HCT116 (cell line): ENCODE measurements at regions of chr11 and their contacts with region 1.

Region 1: DNA sequence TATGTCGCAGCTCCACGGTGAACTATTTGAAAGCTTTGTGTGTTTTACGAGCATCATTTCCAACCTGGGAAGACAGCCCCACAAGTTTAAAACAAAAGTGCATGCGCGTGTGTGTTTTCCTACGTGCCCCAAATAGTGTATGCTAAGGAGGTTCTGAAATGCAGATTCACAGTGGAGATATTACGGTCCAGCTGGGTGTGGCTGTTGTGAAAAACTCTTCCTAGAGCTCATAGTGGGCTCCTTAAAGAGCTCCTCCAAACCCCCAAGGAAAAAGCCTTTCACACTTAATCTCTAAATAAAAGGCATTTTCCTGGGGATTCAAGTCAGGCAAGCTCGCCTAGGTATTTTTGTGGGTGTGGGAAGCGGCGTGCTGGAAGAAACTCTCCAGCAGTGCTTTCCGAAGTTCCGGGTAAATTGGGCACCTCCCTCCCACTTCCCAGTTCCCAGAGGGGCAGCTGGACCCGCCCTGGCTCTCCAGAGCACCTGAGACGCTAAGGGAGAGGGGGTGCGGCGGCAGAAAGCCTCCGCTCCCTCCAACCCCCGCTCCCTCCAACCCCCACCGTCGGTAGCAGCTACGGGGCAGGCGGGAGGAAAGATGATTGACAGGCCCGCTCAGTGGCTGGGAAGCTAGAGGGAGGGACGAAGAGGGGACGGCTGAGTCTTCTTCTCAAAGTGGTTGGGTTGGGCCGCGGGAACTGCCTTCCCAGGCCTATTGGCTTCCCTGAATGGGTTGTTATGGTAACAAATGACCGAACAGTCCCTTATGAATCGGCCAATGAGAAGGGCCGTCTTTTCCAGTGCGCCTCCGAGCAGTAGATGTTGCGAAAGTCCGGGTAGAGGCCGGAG is 558 bp upstream of the PCF11 start:
- DNase-seq: peak; percentile 99
- ATAC-seq: peak; percentile 89
- H3K4me3 ChIP-seq: peak overlapping the region; percentile 65 to 97
- H3K27ac ChIP-seq: peak overlapping the region; percentile 88
- H3K4me1 ChIP-seq: peaks cover 11 to 41% of the 10 kb centered on the region in 2 experiments
- H3K27me3 ChIP-seq: no peaks in the 10 kb centered on the region
- CTCF ChIP-seq: no peak
- POLR2A ChIP-seq: peak; percentile 56
- RAD21 ChIP-seq: no peak

Region 2: DNA sequence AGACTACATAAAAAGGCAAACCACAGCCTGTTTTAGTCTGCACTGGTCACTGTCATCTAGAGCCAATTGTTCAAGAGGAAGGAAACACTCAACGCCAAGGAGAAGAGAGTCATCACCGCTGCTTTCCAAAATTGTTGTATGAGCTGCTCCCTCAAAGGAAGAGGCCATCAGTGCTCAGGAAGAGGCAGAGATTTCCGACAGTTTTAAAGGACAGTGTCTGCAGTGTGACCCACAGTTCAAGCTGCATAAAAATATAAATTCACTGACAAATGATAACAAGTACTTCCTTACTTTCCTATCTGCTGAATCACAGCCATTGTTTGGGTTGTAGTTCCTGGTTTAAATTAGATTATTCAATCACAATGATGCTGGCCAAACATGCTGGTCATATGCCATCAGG is 272.5 kb before region 1 on chr11:
- CTCF ChIA-PET with region 1: no interaction called
- POLR2A ChIA-PET with region 1: no interaction called
- RAD21 ChIA-PET with region 1: no interaction called
- intact Hi-C with region 1: no loop called
- DNase-seq: no peak
- ATAC-seq: no peak
- H3K4me3 ChIP-seq: no peak overlapping the region
- H3K27ac ChIP-seq: no peak overlapping the region
- H3K4me1 ChIP-seq: no peaks in the 10 kb centered on the region
- H3K27me3 ChIP-seq: no peaks in the 10 kb centered on the region
- CTCF ChIP-seq: no peak
- POLR2A ChIP-seq: no peak
- RAD21 ChIP-seq: no peak

Region 3: DNA sequence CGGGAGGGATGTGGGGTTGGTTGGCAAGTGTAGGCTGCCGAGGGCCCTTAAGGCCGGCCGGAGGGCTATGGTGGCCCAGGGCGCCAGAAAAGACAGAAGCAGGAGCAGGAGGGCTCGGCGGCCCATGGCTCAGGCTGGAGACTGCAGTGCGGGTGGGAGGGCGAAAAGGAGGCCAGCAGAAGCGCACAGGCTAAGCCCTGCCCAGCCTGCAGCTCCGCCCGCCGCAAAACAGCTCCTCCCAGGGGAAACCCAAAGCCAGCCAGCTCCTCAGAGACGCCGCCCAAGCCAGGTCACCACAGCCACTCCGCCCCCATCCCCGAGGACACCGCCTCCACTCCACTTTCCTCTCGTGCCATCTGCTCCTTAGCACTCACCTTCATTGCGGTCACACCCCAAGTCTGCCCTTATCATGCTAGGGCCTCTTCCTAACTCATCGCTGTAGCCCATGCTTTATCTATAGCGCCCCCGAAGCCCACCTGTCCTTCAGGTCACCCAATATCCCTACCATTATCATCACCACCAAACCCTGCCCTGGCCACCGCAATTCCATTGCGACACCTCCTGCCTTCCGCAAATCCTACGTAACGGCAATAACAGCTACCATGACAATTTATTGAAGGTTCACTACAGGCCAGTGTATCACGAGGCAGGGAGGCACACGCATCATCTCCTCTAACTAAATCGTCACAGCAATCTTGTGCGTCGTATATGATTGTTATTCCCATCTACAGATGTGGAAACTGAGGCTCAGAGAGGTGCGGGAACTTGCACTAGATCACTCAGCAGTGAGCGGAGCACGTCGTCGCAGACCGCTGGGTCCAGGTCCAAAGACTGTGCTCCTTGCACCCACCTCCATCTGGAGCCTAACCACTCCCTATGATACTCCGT is 255.9 kb before region 1 on chr11 and contains the start of gene PRCP:
- CTCF ChIA-PET with region 1: no interaction called
- POLR2A ChIA-PET with region 1: interaction called, 15 read pairs
- RAD21 ChIA-PET with region 1: no interaction called
- intact Hi-C with region 1: loop called (anchors 1 kb)
- DNase-seq: peak; percentile 82
- ATAC-seq: peak; percentile 89
- H3K4me3 ChIP-seq: peak within 1 kb of the TSS; percentile 55 to 96
- H3K27ac ChIP-seq: peak within 1 kb of the TSS; percentile 69
- H3K4me1 ChIP-seq: peaks cover 10 to 24% of the 10 kb centered on the region in 2 experiments; a peak in 3 of 4 replicates
- H3K27me3 ChIP-seq: no peaks in the 10 kb centered on the region
- CTCF ChIP-seq: 0 out of 6 replicates have a peak, but pooled peaks of 1 of the 3 experiments have one; percentile 2
- POLR2A ChIP-seq: peak; percentile 59
- RAD21 ChIP-seq: no peak
- total RNA-seq, gene PRCP: 50.0 TPM

Region 4: GRCh38 chr11:83071567-83072349 is 84.6 kb before region 1 on chr11 and contains the start of gene RAB30:
- CTCF ChIA-PET with region 1: no interaction called
- POLR2A ChIA-PET with region 1: interaction called, 8 read pairs
- RAD21 ChIA-PET with region 1: no interaction called
- intact Hi-C with region 1: loop called (anchors 1 kb)
- DNase-seq: peak; percentile 99
- ATAC-seq: peak; percentile 95
- H3K4me3 ChIP-seq: peak within 1 kb of the TSS; percentile 90 to 95
- H3K27ac ChIP-seq: peak within 1 kb of the TSS; percentile 77
- H3K4me1 ChIP-seq: peaks cover 11 to 27% of the 10 kb centered on the region in 2 experiments
- H3K27me3 ChIP-seq: no peaks in the 10 kb centered on the region
- CTCF ChIP-seq: no peak
- POLR2A ChIP-seq: peak; percentile 45
- RAD21 ChIP-seq: no peak; the same call in 1 of the 2 replicates
- total RNA-seq, gene RAB30: 5.7 TPM

Region 5: GRCh38 chr11:83087035-83087434 is 69.3 kb before region 1 on chr11:
- CTCF ChIA-PET with region 1: no interaction called
- POLR2A ChIA-PET with region 1: interaction called, 10 read pairs
- RAD21 ChIA-PET with region 1: no interaction called
- intact Hi-C with region 1: loop called (anchors 2 kb)
- DNase-seq: no peak
- ATAC-seq: peak; percentile 64
- H3K4me3 ChIP-seq: no peak overlapping the region
- H3K27ac ChIP-seq: no peak overlapping the region
- H3K4me1 ChIP-seq: peaks cover 2 to 5% of the 10 kb centered on the region in 2 experiments; a peak in 3 of 4 replicates
- H3K27me3 ChIP-seq: no peaks in the 10 kb centered on the region
- CTCF ChIP-seq: peak; percentile 11 to 42 (median 35); a peak in 3 of 6 replicates
- POLR2A ChIP-seq: no peak
- RAD21 ChIP-seq: peak; percentile 67

Region 6: GRCh38 chr11:83193315-83194280 is 37.2 kb after region 1 on chr11 and contains the start of gene ANKRD42:
- CTCF ChIA-PET with region 1: no interaction called
- POLR2A ChIA-PET with region 1: interaction called, 4 read pairs
- RAD21 ChIA-PET with region 1: no interaction called
- intact Hi-C with region 1: loop called (anchors 5 kb)
- DNase-seq: peak; percentile 89
- ATAC-seq: peak; percentile 91
- H3K4me3 ChIP-seq: peak within 1 kb of the TSS; percentile 56 to 85
- H3K27ac ChIP-seq: peak within 1 kb of the TSS; percentile 65
- H3K4me1 ChIP-seq: peaks cover 12 to 19% of the 10 kb centered on the region in 2 experiments
- H3K27me3 ChIP-seq: no peaks in the 10 kb centered on the region
- CTCF ChIP-seq: no peak
- POLR2A ChIP-seq: peak; percentile 32
- RAD21 ChIP-seq: no peak
- total RNA-seq, gene ANKRD42: 5.4 TPM

Region 7: DNA sequence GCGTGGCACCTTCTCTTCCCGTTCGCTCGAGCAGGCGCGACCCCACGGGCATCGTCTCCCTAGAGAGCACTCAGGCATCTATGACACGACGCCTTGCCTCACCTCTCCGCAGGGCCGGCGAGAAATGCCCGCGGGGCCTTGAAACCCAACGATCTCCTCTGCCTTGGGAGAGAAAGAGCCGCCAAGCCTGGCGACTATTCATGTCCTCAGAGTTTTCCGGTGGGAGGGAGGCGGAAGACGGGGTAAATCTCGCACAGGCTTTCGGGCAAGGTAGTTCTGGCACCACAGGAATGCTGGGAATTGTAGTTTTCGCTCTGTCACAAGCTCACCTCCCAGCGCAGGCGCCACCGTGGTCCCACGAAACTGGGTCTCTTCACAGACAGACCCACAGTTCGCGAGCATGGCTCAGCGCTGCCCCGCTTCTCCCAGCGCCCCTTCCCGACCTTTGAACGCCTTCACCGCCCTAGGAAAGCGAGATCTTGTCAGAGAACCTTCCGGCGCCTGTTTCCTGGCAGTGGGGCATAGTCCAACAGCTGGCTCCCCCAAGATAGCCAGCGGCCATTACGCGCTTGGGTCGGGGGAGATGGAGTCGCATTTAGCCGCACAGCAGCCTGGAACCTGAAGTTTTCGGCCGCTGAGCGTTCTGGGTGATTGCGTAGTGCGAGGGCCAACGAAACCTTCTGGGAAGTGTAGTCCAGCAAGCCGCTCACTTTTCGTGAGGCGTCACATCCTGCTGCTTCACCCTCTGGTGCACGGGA is 129.6 kb after region 1 on chr11 and contains the start of gene CCDC90B:
- CTCF ChIA-PET with region 1: no interaction called
- POLR2A ChIA-PET with region 1: interaction called, 3 read pairs
- RAD21 ChIA-PET with region 1: no interaction called
- intact Hi-C with region 1: loop called (anchors 1 kb)
- DNase-seq: peak; percentile 97
- ATAC-seq: peak; percentile 92
- H3K4me3 ChIP-seq: peak within 1 kb of the TSS; percentile 56 to 63
- H3K27ac ChIP-seq: peak within 1 kb of the TSS; percentile 69
- H3K4me1 ChIP-seq: peaks cover 0 to 16% of the 10 kb centered on the region in 2 experiments; a peak in 2 of 4 replicates
- H3K27me3 ChIP-seq: no peaks in the 10 kb centered on the region
- CTCF ChIP-seq: 0 out of 6 replicates have a peak, but pooled peaks of 1 of the 3 experiments have one; percentile 9
- POLR2A ChIP-seq: peak; percentile 91
- RAD21 ChIP-seq: no peak
- total RNA-seq, gene CCDC90B: 30.3 TPM